Activated naive CD4-positive, alpha-beta T cell treated with anti-CD3 and anti-CD28 coated beads for 36 hours (primary cell): ENCODE measurements at regions of chr3 and their contacts with region 1.

Region 1: DNA sequence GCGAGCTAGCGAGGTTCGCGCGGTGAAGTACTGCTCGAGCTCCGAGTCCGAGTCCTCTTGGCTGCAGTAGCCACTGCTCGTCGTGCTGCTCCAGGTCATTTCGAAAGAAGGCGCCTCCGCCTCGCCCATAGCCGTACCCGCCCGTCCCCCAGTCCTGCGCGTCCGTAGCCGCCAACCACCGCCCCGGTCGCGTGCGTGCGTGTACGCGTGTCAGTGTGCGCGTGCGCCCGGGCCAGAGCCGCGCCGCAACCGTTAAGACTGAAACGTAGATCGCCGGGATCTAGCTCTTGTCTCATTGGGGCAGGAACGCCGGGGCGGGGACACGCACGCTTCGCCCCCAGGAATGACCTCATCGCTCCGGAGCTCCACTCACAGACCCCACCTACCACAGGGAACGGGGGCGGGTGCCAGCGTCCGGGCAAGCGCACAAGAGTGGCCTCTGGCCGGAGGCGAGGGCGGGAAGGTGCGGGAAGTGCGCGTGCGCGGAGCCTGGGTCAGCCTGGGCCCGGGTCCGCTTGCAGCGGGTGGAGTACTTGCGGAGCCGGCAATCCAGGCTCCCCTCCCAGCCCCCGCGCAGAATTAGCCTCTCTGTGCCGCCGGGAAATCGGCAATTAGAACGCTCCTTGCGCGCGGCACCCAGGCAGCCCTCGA is 3.3 kb downstream of the RASSF1 start:
- DNase-seq: peak; percentile 99
- H3K4me3 Mint-ChIP-seq: peak overlapping the region; percentile 94
- H3K27ac Mint-ChIP-seq: peak overlapping the region; percentile 94
- H3K4me1 Mint-ChIP-seq: peaks cover 57% of the 10 kb centered on the region
- H3K27me3 Mint-ChIP-seq: no peaks in the 10 kb centered on the region

Region 2: GRCh38 chr3:49998326-49998725 is 339.0 kb before region 1 on chr3:
- CTCF ChIA-PET with region 1: no interaction called
- intact Hi-C with region 1: no loop called
- DNase-seq: no peak
- H3K4me3 Mint-ChIP-seq: no peak overlapping the region
- H3K27ac Mint-ChIP-seq: no peak overlapping the region
- H3K4me1 Mint-ChIP-seq: peaks cover 16% of the 10 kb centered on the region
- H3K27me3 Mint-ChIP-seq: no peaks in the 10 kb centered on the region

Region 3: GRCh38 chr3:50235716-50236496 is 101.4 kb before region 1 on chr3 and contains the start of gene GNAI2:
- CTCF ChIA-PET with region 1: no interaction called
- intact Hi-C with region 1: loop called (anchors 2 kb)
- DNase-seq: peak; percentile 99
- H3K4me3 Mint-ChIP-seq: peak within 1 kb of the TSS; percentile 95
- H3K27ac Mint-ChIP-seq: peak within 1 kb of the TSS; percentile 92
- H3K4me1 Mint-ChIP-seq: peaks cover 33% of the 10 kb centered on the region
- H3K27me3 Mint-ChIP-seq: no peaks in the 10 kb centered on the region
- total RNA-seq, gene GNAI2: 272 to 276 TPM

Region 4: GRCh38 chr3:50321336-50322114 is 15.8 kb before region 1 on chr3:
- CTCF ChIA-PET with region 1: interaction called, 31 read pairs
- intact Hi-C with region 1: no loop called
- DNase-seq: peak; percentile 83
- H3K4me3 Mint-ChIP-seq: peak overlapping the region; percentile 86
- H3K27ac Mint-ChIP-seq: peak overlapping the region; percentile 80
- H3K4me1 Mint-ChIP-seq: peaks cover 38% of the 10 kb centered on the region
- H3K27me3 Mint-ChIP-seq: no peaks in the 10 kb centered on the region

Region 5: DNA sequence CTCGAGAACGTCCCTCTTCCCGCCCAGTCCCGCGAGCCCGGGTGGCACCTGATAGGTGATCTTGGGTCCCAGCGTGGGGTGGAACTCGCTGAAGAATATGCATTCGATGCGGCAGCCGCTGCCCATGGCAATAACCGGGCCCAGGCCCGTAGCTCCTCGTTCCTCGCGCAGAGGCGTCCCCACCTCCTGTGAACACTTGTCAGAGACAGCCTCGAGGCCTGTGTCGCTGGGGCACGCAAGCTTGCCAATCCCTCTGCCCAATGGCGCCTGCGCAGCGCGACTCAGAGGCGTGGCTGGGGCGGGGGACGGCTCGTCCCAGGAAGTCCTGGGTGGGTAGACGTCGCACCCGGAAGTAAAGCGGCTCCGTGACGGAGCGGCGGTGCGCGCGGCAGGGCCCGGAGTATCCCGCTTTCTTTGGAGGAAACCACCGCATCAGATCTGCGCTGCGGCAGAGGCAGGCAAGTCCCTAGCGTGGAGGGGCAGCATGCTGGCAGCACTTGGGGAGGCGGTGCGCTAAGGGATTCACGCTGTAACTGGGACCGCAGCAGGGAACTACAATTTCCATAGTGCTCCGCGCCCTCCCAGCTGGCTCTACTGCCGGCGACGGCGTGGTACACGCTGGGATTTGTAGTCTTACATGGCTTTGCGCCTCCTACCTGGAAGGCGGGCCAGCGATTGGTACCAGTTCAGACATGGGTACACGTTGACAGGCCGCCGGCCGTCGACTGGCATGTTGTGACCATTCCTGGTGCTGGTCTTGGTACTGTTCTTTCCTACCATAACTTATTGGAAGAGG is 13.4 kb after region 1 on chr3 and contains the starts of genes CYB561D2 and NPRL2:
- CTCF ChIA-PET with region 1: interaction called, 14 read pairs
- intact Hi-C with region 1: loop called (anchors 1 kb)
- DNase-seq: peak; percentile 99
- H3K4me3 Mint-ChIP-seq: peak within 1 kb of the TSS; percentile 97
- H3K27ac Mint-ChIP-seq: peak within 1 kb of the TSS; percentile 97
- H3K4me1 Mint-ChIP-seq: peaks cover 59% of the 10 kb centered on the region
- H3K27me3 Mint-ChIP-seq: no peaks in the 10 kb centered on the region
- total RNA-seq, gene CYB561D2: 11.0 to 11.3 TPM
- total RNA-seq, gene NPRL2: 27.7 to 31.3 TPM

Region 6: DNA sequence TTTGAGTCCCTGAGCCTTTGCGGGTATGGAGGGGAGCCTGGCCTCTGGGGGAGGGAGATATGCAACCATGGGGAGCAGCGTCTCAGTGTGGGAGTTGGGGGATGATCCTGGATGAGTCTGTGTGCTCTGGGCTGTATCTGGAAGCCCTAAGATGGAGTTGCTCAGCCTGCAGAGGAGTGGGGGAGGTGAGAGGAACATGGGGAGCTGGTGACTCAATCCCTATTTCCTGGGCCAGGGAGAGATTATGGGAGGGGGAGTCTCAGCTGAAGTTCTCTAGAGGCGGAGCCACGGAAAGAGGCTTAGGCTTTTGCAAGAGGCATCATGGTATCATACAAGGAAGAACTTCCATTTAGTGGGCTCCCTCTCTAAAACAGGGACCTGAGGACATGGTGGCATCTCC is 81.5 kb after region 1 on chr3:
- CTCF ChIA-PET with region 1: no interaction called
- intact Hi-C with region 1: no loop called
- DNase-seq: no peak
- H3K4me3 Mint-ChIP-seq: no peak overlapping the region
- H3K27ac Mint-ChIP-seq: no peak overlapping the region
- H3K4me1 Mint-ChIP-seq: no peaks in the 10 kb centered on the region
- H3K27me3 Mint-ChIP-seq: no peaks in the 10 kb centered on the region